GM10248 (cell line): ENCODE measurements at regions of chr19 and their contacts with region 1.

Region 1: DNA sequence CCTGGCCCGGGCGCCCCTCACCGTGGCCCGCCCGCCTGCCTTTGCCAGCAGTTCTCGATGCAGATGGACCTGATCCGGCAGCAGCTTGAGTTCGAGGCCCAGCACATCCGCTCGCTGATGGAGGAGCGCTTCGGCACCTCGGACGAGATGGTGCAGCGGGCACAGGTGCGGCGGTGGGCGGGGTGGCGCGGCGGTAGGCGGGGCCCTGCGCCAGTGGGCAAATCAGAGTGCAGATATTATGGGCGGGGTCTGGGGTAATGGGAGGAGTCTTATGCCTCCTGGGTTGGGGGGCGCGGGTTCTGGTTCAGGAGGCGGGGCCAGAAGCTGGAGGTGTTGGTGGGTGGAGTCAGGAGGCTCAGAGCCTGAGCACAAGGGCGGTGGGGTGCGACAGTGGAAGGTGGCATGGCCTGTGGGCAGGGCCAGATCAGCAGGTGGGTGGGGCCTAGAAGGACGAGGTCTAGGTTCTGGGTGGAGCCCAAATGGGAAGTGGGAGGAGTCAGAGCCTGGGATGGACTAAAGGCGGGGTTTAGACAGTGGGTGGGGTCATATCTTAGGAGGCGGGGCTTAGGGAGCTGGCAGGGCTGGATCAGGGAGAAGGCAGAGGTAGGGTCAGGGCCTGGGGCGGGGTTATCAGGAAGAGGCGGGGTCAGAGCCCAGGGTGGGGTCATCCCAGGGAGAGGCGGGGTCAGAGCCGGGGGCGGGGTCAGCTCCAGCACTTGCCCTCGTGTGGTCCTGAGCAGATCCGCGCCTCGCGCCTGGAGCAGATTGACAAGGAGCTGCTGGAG is 5.6 kb downstream of the APC2 start:
- DNase-seq: peak; percentile 79
- CTCF ChIP-seq: no peak

Region 2: GRCh38 chr19:1445185-1445931 is 10.2 kb before region 1 on chr19:
- CTCF ChIA-PET with region 1: interaction called, 25 read pairs
- POLR2A ChIA-PET with region 1: interaction called, 7 read pairs
- DNase-seq: peak; percentile 94
- CTCF ChIP-seq: peak; percentile 96